Activated T-helper 1 cell treated with anti-CD3 and anti-CD28 coated beads, Interleukin-12 subunit alpha, Interleukin-12 subunit beta, Interleukin-2, Interleukin-4 antibody, amounts not matched to agents 30 ng/mL and 10 ng/mL and 1 ng/mL, durations not matched to agents 14 hours and 24 hours and 36 hours (primary cell): ENCODE measurements at regions of chr4 and their contacts with region 1.

Region 1: DNA sequence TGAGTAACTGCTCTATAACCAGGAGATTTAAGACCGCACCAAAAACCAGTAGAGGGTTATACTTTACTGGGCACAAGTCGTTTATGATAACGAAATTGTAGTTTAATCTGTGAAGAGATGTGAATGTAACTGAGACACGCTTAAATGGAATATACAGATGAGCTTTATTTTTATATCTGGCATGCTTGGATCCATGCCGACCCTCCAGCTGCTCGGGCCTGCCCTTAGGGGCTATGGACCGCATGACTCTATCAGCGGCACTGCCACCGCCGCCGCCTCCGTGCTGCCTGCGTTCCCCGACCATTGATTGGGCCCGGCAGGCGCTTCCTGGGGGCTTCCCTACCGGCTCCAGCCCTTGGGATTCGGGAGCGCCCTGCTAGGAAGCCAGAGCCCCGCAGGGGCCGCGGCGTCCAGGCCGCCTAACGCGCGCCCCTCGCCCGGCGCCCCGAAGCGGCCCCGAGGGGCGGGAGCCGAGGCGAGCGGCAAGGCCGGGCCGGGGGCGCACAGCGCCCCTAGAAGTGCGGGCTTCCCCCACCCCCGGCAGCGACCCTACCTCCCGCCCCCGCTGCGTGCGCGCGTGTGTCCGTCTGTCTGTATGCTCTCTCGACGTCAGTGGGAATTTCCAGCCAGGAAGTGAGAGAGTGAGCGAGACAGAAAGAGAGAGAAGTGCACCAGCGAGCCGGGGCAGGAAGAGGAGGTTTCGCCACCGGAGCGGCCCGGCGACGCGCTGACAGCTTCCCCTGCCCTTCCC is at the start of gene NFKB1:
- DNase-seq: peak; percentile 83
- H3K4me3 Mint-ChIP-seq: peak within 1 kb of the TSS; percentile 94
- H3K27ac Mint-ChIP-seq: peak within 1 kb of the TSS; percentile 91
- H3K4me1 Mint-ChIP-seq: peaks cover 33% of the 10 kb centered on the region
- H3K27me3 Mint-ChIP-seq: peaks cover 5% of the 10 kb centered on the region
- total RNA-seq, gene NFKB1: 139 and 145 TPM in 2 replicates

Region 2: GRCh38 chr4:101020956-101021355 is 1479.9 kb before region 1 on chr4:
- intact Hi-C with region 1: loop called (anchors 5 kb)
- DNase-seq: peak; percentile 16
- H3K4me3 Mint-ChIP-seq: peak overlapping the region; percentile 43
- H3K27ac Mint-ChIP-seq: peak overlapping the region; percentile 67
- H3K4me1 Mint-ChIP-seq: peaks cover 62% of the 10 kb centered on the region
- H3K27me3 Mint-ChIP-seq: no peaks in the 10 kb centered on the region

Region 3: DNA sequence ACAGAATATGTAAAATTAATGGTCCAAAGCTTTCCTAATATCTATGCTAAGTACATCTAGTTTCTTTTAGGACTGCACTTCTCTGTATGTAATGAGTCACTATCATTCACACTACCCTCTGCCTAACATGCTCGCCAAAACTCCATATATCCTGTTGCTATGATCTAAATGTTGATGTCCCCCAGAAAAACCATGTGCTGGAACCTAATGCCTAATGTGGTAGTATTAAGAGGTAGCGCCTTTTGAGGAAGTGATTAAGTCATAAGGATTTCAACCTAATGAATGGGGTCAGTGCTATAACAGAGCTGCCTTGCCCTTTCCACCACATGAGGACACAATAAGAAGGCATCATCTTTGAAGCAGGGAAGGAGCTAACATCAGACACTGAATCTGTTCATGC is 34.6 kb before region 1 on chr4:
- intact Hi-C with region 1: loop called (anchors 2 kb)
- DNase-seq: no peak
- H3K4me3 Mint-ChIP-seq: no peak overlapping the region
- H3K27ac Mint-ChIP-seq: no peak overlapping the region
- H3K4me1 Mint-ChIP-seq: peaks cover 20% of the 10 kb centered on the region
- H3K27me3 Mint-ChIP-seq: peaks cover 4% of the 10 kb centered on the region

Region 4: DNA sequence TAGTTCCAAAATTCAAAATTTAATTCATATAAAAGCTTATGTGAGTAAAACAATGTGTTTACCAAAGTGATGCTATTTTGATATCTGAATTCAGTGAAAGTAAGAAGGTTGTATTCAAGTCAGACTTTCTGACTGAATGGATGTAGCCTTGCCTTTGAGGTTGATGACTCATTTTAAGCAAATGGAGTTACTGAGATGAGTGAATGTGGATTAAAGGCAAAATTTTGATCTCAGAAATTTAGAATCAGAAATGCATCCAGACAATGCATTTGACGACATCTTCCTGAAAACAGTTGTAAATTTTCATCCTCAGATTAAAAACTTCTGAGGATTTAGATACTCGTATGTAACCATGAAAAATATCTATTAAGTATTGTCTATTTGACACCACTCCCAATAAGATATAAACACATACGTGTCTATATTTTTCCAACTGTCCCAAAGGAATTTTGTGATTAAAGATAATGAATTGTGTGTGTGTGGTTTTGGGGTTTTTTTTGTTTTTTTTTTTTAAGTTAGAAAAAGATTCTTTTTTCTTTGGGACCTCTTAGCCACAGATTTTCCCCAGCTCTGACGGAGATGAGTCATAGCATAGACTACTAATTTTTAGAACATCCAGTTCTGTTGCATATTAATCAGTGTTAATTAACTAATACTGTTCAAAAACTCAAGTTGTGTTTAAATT is 34.7 kb after region 1 on chr4:
- intact Hi-C with region 1: loop called (anchors 1 kb)
- DNase-seq: no peak
- H3K4me3 Mint-ChIP-seq: peak overlapping the region; percentile 39
- H3K27ac Mint-ChIP-seq: no peak overlapping the region
- H3K4me1 Mint-ChIP-seq: peaks cover 46% of the 10 kb centered on the region
- H3K27me3 Mint-ChIP-seq: no peaks in the 10 kb centered on the region

Region 5: DNA sequence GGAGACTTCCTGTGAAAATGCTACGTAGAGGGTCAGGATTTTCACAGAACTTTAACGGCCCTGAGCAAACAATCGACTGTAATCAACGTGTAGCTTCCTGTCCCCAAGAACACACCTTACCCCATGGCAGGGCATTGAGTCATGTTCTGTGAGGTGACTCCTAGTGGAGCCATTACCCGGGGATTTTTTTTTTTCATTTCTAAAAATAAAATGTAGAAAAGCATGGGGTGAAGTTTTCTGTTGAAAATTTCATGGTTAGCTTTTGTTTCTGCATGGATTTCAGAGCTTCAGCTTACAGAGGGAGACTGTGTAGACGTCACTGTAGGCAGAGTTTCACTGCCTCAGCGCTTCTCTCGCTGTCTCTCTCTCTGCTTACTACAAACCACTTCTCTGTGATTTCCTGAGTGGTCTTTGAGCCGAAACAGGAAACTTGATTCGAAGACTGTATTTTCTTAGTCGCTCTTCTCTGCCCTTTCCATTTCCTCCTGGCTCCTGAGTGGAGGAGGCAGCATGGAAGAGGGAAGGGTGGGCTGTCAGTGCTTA is 112.0 kb after region 1 on chr4:
- intact Hi-C with region 1: loop called (anchors 2 kb)
- DNase-seq: peak; percentile 41
- H3K4me3 Mint-ChIP-seq: peak overlapping the region; percentile 70
- H3K27ac Mint-ChIP-seq: peak overlapping the region; percentile 95
- H3K4me1 Mint-ChIP-seq: peaks cover 83% of the 10 kb centered on the region
- H3K27me3 Mint-ChIP-seq: no peaks in the 10 kb centered on the region

Region 6: DNA sequence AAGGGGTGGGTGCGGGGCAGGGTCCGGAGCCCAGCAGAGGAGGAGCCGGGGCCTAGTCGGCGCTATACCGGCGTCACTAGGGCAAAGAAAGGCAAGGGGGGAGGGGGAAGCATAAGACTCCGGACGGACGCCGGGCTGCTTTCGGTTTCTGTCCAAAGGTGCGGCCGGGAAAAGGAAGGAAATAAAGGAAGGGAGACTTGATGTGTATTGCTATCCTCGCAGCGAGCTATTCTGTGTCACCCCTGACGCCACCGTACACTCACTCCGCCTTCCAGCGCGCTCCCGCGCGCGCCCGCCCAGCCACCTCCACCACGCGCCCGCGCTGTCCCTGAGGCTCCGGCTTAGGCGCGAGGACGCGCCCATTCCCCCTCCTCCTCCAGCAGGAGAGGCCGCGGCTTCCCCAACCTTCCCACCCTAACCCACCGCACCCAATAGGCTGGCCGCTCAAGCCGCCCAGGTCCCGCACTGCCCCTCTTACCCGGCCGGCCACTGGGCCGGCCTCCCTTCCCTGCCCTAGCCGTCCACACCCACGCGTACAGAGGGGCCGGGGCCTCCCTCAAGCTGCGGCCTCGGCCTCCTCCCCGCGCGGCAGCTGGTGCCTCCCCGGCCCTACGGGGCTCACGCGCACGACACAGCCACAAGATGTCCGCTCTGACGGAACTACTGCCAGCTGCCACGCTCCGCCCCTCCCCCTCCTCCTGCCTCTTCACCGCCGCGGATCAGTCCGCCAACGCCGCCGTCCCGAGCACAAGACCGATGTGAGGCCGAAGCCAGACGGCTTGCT is 326.2 kb after region 1 on chr4 and contains the start of gene UBE2D3:
- intact Hi-C with region 1: loop called (anchors 1 kb)
- DNase-seq: peak; percentile 92
- H3K4me3 Mint-ChIP-seq: no peak within 1 kb of the TSS
- H3K27ac Mint-ChIP-seq: no peak within 1 kb of the TSS
- H3K4me1 Mint-ChIP-seq: peaks cover 38% of the 10 kb centered on the region
- H3K27me3 Mint-ChIP-seq: no peaks in the 10 kb centered on the region
- total RNA-seq, gene UBE2D3: 480 and 507 TPM in 2 replicates

Region 7: DNA sequence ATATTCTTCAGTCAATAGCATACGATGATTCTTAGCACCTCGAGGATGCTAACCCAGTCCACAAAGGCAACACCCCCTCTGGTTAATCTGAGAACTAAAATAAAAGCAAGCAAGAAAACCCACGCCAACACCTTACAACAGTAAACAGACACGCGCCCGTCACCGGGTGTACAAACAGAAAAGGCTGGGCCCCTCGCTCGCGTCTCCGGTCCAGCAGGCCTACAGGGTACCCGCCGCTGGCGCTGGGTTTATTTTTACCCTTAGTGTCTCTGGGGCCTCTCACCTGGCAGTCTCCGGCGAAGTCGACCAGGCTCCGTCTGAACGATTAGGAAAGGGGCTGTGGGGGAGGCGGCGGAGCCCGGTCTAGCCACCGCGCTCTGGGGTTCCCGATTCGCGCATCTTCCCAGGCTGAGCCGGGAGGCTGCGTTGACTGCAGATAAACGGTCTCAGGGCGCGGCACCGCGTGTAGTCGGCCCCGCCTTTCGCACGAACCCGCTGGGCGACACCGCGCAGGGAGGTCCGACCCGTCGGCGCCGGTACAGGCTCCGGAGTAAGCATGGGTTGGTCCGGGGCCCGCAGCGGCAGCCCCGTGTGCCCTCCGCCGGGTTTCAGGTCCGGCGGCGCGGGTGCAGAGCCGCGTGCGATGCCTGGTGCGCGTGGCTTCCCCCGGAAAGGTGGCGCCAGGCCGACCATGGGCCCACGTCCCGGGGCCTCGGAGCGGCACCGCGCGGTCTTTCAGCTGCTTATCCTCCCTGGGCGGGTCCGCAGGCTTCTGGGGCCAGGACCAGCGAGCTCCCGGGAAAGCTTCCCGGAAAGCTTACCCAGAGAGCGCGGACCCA is 575.2 kb after region 1 on chr4:
- intact Hi-C with region 1: loop called (anchors 2 kb)
- DNase-seq: peak; percentile 60
- H3K4me3 Mint-ChIP-seq: peak overlapping the region; percentile 99
- H3K27ac Mint-ChIP-seq: peak overlapping the region; percentile 100
- H3K4me1 Mint-ChIP-seq: peaks cover 51% of the 10 kb centered on the region
- H3K27me3 Mint-ChIP-seq: no peaks in the 10 kb centered on the region